ENCODE measurements at regions of chr4 and their contacts with region 1.

Region 1: DNA sequence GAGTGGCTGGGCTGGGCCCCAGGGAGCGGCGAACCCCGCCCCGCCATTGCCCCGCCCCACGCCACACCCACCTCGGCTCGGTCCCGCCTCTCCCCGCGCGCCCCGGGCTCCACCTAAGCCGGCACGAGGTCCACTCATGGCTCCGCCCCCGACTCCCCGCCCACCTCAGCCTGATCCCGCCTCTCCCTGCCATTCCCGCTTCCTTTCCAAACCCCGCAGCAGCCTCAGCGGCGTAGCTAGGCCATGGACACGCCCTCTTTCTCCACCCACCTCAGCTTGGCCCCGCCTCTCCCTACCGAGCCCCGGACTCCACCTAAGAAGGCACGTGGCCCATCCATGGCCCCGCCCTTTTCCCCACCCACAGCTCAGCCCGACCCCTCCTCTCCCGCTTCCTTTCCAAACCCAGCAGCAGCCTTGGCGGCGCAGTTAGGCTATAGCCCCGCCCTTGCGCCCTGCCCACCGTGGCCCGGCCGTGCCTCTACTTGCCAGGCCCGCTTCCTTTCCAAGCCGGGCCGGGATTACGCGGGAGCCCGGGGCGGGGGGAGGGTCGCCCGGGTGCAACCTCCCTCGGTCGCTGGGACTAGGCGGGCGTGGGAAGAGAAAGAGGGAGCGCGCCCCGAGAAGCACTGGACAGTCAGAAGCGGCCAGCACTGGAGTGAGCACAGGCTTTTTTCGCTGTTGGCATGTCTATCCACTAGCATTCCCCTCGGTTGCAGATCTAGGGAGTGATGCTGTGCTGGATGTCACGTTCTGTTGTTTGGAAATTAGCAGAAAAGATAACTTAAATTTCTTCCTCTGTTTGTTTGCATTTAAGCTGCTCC is at the start of gene RELL1:
- H3K4me3 Mint-ChIP-seq: peak within 1 kb of the TSS; percentile 86
- H3K27ac Mint-ChIP-seq: peak within 1 kb of the TSS; percentile 90
- H3K4me1 Mint-ChIP-seq: peaks cover 40% of the 10 kb centered on the region
- H3K27me3 Mint-ChIP-seq: no peaks in the 10 kb centered on the region

Region 2: GRCh38 chr4:37400241-37400881 is 286.2 kb before region 1 on chr4:
- intact Hi-C with region 1: no loop called
- H3K4me3 Mint-ChIP-seq: no peak overlapping the region
- H3K27ac Mint-ChIP-seq: no peak overlapping the region
- H3K4me1 Mint-ChIP-seq: peaks cover 6% of the 10 kb centered on the region
- H3K27me3 Mint-ChIP-seq: no peaks in the 10 kb centered on the region

Region 3: GRCh38 chr4:37540486-37540885 is 146.1 kb before region 1 on chr4:
- intact Hi-C with region 1: no loop called
- H3K4me3 Mint-ChIP-seq: no peak overlapping the region
- H3K27ac Mint-ChIP-seq: no peak overlapping the region
- H3K4me1 Mint-ChIP-seq: no peaks in the 10 kb centered on the region
- H3K27me3 Mint-ChIP-seq: no peaks in the 10 kb centered on the region

Region 4: GRCh38 chr4:37754410-37755185 is 68.0 kb after region 1 on chr4:
- intact Hi-C with region 1: loop called (anchors 1 kb)
- H3K4me3 Mint-ChIP-seq: peak overlapping the region; percentile 74
- H3K27ac Mint-ChIP-seq: peak overlapping the region; percentile 97
- H3K4me1 Mint-ChIP-seq: peaks cover 53% of the 10 kb centered on the region
- H3K27me3 Mint-ChIP-seq: no peaks in the 10 kb centered on the region